PC-3 (cell line): ENCODE measurements at regions of chr5 and their contacts with region 1.

Region 1: GRCh38 chr5:74384851-74385250 is 255.7 kb downstream of the ENC1 start:
- DNase-seq: no peak
- ATAC-seq: no peak
- H3K4me3 ChIP-seq: no peak overlapping the region
- H3K27ac ChIP-seq: no peak overlapping the region
- H3K4me1 ChIP-seq: peaks cover 41% of the 10 kb centered on the region
- H3K27me3 ChIP-seq: no peaks in the 10 kb centered on the region
- CTCF ChIP-seq: no peak

Region 2: DNA sequence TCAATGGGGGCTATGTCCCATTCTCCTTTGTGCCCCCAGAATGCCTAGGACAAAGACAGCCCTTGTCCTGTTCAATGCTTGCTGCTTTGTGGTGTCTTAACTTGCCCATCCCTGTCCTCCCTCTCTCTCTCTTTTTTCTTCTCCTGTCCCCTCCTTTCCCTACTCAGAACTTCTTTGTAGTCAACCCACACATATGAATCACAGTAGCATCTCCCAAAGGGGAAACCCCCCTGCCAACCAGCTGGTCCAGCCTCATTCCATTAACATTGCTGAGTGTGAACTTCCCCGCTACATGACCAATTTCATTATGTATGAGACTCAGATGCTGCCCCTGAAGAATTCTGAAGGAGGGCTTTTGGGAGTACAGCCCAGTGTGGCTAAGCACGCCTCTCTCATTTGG is 152.6 kb before region 1 on chr5:
- CTCF ChIA-PET with region 1: no interaction called
- POLR2A ChIA-PET with region 1: no interaction called
- intact Hi-C with region 1: loop called (anchors 5 kb)
- DNase-seq: peak; percentile 77
- ATAC-seq: no peak; the same call in 1 of the 2 replicates
- H3K4me3 ChIP-seq: no peak overlapping the region
- H3K27ac ChIP-seq: peak overlapping the region; percentile 79
- H3K4me1 ChIP-seq: peaks cover 50% of the 10 kb centered on the region
- H3K27me3 ChIP-seq: no peaks in the 10 kb centered on the region
- CTCF ChIP-seq: no peak

Region 3: DNA sequence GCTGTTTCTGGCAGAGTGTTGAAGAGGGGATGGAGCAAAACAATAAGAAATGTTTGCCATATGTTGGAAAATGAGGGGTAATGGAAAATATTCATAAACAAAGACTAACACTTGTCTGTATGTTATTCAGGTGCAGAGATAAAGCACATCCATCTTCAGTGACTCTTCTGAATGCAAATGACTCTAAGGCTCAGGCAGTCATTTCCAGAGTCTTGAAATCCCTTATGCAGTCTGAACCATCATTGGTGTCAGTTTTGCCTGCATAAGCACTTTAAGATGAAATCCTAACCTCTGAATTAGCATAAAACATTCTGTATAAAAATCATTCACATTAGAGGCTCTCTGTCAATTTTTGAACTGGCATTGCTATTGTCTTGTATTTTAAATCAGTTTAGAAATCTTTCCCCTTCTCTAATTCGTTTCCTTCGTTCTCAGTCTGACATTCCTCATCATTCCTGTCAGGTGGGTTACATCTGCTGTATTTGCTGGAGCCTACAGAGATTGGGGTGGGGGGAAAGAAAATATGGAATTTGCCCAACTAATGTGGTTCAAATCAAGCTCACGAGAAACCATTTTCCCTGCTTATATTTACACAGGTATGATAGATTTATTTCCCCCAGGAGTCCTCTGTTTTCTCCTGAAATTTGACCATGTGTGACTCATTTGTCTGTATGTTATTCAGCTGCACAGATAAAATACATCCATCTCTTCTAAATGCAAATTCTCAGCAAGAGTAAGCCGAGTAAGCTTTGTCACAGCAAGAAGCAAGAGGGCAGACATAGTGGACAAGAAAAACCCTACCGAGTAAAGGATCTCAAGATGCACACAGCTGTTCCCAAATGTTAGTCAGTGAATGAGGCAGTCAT is 224.1 kb after region 1 on chr5:
- CTCF ChIA-PET with region 1: no interaction called
- POLR2A ChIA-PET with region 1: no interaction called
- intact Hi-C with region 1: no loop called
- DNase-seq: peak; percentile 36
- ATAC-seq: peak; percentile 58
- H3K4me3 ChIP-seq: no peak overlapping the region
- H3K27ac ChIP-seq: no peak overlapping the region
- H3K4me1 ChIP-seq: peaks cover 14% of the 10 kb centered on the region
- H3K27me3 ChIP-seq: no peaks in the 10 kb centered on the region
- CTCF ChIP-seq: no peak